Aorta (tissue), 5 donors: ENCODE measurements at regions of chr10 and their contacts with region 1.

Region 1: DNA sequence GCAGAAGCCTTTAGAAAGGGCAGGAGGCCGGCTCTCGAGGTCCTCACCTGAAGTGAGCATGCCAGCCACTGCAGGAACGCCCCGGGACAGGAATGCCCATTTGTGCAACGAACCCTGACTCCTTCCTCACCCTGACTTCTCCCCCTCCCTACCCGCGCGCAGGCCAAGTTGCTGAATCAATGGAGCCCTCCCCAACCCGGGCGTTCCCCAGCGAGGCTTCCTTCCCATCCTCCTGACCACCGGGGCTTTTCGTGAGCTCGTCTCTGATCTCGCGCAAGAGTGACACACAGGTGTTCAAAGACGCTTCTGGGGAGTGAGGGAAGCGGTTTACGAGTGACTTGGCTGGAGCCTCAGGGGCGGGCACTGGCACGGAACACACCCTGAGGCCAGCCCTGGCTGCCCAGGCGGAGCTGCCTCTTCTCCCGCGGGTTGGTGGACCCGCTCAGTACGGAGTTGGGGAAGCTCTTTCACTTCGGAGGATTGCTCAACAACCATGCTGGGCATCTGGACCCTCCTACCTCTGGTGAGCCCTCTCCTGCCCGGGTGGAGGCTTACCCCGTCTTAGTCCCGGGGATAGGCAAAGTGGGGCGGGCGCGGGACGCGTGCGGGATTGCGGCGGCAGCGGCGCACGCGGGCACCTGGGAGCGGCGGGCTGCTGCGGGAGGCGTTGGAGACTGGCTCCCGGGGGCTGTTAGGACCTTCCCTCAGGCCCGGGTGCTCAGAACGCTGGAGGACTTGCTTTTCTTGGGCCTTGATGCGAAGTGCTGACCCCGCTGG is at the start of gene FAS:
- DNase-seq: peak; percentile 86 to 90
- ATAC-seq: peak; percentile 86
- H3K4me3 ChIP-seq: peak within 1 kb of the TSS; percentile 56 to 91
- H3K27ac ChIP-seq: peak within 1 kb of the TSS; percentile 0 to 64
- H3K4me1 ChIP-seq: peaks cover 3 to 6% of the 10 kb centered on the region in 2 donors
- H3K27me3 ChIP-seq: no peaks in the 10 kb centered on the region
- total RNA-seq, gene FAS: 27.4 to 28.5 TPM

Region 2: DNA sequence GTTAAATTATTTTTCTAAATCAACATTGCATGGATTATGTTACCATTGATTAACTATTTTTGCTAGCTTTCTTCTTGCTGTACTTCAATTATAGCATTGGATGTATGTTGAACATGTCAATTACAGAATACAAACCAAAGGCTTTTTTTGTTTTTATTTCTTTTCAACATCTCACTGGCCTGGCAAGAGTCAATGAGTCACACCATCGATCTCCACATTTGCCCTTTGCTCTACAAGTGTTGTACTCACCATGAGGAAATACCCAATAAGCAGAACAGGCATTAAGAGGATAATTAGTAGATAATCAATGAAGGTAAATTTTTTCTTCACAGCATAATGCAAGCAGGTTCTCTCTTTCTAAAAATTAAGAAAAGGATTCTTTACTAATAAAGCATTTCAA is 162.3 kb before region 1 on chr10:
- intact Hi-C with region 1: no loop called
- DNase-seq: no peak
- ATAC-seq: no peak
- H3K4me3 ChIP-seq: no peak overlapping the region
- H3K27ac ChIP-seq: no peak overlapping the region
- H3K4me1 ChIP-seq: no peaks in the 10 kb centered on the region
- H3K27me3 ChIP-seq: no peaks in the 10 kb centered on the region

Region 3: DNA sequence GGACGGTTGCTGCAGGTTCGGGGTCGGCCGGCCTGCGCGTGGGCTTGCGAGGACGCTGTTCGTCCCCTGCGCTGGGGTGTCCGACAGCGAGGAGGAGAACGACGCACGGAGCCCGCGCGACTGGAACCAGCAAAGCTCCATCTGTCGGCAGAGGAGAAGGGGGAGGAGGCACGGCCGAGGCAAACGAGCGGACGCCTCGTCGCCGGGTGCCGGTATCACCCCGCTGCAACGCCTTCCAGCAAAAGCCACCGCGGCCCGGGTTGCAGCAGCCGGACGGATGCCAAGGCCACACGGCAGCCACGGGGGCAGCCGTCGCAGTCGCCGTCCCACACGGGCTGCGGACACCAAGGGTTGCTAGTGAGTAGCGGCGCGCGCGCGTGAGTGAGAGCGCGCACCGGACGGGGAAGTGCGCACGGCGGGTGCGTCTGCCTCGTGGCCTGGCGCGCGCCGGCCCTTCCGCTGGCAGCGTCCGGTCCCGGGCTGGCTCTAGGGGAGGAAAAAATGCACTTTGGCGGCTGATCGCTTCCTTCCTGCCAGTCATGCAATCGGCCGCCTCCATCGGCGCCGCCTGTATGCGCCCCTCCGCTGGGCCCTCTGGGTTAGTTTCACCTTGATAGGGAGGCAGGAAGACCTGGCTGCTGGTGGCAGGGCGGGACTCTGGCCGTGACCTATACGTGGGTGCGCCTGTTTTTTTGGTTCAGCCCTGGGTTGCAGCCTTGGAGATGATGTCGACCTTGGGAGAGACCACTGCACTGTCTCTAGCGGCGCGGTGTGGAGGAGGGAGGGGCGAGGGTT is 110.1 kb before region 1 on chr10:
- intact Hi-C with region 1: loop called in 1 of 2 experiments (anchors 5 kb)
- DNase-seq: peak; percentile 91 to 92
- ATAC-seq: peak; percentile 96
- H3K4me3 ChIP-seq: peak overlapping the region; percentile 38 to 44
- H3K27ac ChIP-seq: peak overlapping the region in 1 of 2 donors; percentile 37
- H3K4me1 ChIP-seq: no peaks in the 10 kb centered on the region
- H3K27me3 ChIP-seq: no peaks in the 10 kb centered on the region

Region 4: DNA sequence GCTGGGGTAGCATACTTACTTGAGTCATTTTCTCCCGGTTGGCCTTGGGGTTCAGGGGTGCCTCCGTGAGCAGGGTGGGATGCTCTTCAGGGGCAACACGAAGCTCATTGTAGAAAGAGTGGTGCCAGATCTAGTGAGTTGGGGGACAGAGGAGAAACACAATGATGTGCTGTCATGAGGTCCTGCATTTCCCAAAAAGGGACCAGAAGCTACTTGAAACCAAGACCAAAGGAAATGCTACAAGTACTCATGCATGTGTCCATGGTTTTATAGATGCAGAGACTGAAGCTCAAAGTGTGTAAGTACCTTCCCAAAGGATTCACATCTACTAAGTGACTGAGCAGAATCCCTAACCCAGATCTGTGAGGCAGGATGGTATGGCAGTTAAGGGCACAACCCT is 46.8 kb before region 1 on chr10:
- intact Hi-C with region 1: loop called in 1 of 2 experiments (anchors 2 kb)
- DNase-seq: no peak
- ATAC-seq: no peak
- H3K4me3 ChIP-seq: no peak overlapping the region
- H3K27ac ChIP-seq: peak overlapping the region; percentile 52 to 70
- H3K4me1 ChIP-seq: peaks cover 0 to 2% of the 10 kb centered on the region in 2 donors
- H3K27me3 ChIP-seq: no peaks in the 10 kb centered on the region

Region 5: DNA sequence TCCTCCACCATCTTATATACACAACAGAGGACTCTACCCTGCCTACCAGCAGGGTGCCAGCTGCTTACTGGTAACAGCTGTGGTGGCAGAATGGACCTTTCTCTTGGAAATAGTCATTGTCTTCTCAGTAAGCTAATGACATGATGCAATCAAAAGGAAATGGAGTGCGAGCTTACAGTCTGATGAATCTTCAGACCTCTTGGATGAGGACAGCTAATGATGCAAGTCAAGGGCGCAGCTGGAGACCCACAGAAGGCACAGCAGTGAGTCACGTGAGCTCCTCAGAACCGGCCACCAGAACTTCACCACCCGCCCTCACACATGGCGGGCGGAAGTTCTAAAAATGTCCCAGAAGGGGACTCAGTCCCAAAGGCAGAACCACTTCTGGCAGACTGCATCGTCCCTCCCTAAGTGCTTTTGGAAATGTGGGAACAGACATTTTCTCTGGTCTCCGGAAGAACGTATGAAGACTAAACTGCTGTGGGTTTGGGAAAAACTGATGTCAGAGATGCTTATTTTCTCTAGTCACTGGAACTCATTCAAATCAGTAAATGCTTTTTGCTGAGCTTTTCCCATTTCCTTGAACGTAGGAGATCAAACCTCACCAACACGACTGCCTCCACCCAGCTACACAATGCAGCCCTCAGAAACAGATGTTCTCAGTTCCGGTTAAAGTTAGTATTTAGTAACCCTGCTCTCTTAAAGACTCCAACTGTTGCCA is 96.4 kb after region 1 on chr10:
- intact Hi-C with region 1: no loop called
- DNase-seq: peak; percentile 71 to 79
- ATAC-seq: peak; percentile 67
- H3K4me3 ChIP-seq: no peak overlapping the region
- H3K27ac ChIP-seq: no peak overlapping the region
- H3K4me1 ChIP-seq: no peaks in the 10 kb centered on the region
- H3K27me3 ChIP-seq: no peaks in the 10 kb centered on the region

Region 6: DNA sequence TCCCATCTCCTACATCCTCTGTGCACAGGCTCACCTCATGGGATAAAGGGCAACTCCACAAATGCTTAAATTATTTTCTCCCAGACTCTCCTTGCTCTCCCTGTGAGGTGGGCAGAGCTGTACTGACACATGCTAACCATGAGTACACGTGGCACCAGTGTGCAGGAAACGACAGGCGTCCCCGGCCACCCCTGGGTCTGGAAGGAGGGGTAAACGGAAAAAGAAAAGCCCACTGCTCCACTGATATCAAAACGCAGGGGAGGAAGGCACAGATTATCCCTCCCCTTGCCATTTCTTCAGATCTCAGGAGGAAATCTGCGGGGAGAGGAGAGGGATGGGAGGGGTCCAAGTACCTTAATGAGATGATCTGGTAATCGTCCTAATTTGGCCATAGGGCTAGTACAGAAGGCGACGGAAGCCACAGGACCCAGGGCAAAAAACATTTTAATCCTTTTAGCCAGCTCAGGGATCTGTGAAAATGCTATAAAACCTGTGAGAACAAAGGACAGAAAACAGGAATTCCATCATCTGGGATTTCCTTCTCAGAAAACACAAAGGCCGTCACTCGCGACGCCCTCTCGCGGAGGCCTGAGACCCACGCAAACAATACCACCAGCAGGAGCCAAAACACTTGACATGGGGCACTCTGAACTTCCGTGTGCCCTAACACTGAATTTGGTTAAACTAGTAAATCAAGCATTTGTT is 234.3 kb after region 1 on chr10:
- intact Hi-C with region 1: no loop called
- DNase-seq: no peak
- ATAC-seq: peak; percentile 43
- H3K4me3 ChIP-seq: no peak overlapping the region
- H3K27ac ChIP-seq: no peak overlapping the region
- H3K4me1 ChIP-seq: no peaks in the 10 kb centered on the region
- H3K27me3 ChIP-seq: no peaks in the 10 kb centered on the region

Region 7: GRCh38 chr10:89574368-89574767 is 583.8 kb after region 1 on chr10:
- intact Hi-C with region 1: no loop called
- DNase-seq: no peak
- ATAC-seq: no peak
- H3K4me3 ChIP-seq: no peak overlapping the region
- H3K27ac ChIP-seq: no peak overlapping the region
- H3K4me1 ChIP-seq: no peaks in the 10 kb centered on the region
- H3K27me3 ChIP-seq: no peaks in the 10 kb centered on the region